Right ventricle myocardium inferior (tissue), 1 donor: ENCODE measurements at regions of chr12 and their contacts with region 1.

Region 1: DNA sequence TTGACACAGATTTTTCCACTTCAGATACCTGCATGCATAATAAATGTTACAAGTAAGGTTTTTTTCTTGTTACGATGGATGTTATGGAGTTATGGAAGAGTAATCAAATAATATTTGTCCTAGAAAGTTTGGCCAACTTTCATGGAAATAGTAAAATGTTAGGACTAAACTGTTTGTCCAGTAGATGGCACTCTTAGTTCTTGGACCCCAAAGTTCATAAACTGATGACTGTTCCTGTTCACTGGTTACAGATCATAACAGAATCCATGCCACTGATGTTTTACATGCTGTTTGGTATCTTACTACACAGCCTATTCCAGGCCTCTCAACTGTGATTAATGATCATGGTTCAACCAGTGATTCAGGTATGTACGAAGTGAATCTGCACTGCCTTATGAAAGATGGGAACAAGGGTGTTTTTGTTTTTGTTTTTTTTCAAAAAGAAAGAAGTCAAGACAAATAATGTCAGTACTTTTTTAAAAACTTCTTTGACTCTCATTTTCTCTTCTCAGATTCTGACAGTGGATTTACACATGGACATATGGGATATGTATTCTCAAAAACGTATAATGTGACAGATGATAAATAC is 48.8 kb upstream of the SLCO1C1 start:
- DNase-seq: no peak
- ATAC-seq: peak; percentile 51

Region 2: GRCh38 chr12:20798561-20798960 is 152.2 kb after region 1 on chr12:
- intact Hi-C with region 1: loop called (anchors 5 kb)
- DNase-seq: no peak
- ATAC-seq: peak; percentile 76